ENCODE measurements at regions of chr16 and their contacts with region 1.

Region 1: GRCh38 chr16:56700195-56700594 is 17.9 kb downstream of the MT1X start:
- DNase-seq: no peak
- H3K4me3 ChIP-seq: no peak overlapping the region
- H3K27ac ChIP-seq: no peak overlapping the region
- H3K4me1 ChIP-seq: peaks cover 4% of the 10 kb centered on the region
- CTCF ChIP-seq: no peak

Region 2: DNA sequence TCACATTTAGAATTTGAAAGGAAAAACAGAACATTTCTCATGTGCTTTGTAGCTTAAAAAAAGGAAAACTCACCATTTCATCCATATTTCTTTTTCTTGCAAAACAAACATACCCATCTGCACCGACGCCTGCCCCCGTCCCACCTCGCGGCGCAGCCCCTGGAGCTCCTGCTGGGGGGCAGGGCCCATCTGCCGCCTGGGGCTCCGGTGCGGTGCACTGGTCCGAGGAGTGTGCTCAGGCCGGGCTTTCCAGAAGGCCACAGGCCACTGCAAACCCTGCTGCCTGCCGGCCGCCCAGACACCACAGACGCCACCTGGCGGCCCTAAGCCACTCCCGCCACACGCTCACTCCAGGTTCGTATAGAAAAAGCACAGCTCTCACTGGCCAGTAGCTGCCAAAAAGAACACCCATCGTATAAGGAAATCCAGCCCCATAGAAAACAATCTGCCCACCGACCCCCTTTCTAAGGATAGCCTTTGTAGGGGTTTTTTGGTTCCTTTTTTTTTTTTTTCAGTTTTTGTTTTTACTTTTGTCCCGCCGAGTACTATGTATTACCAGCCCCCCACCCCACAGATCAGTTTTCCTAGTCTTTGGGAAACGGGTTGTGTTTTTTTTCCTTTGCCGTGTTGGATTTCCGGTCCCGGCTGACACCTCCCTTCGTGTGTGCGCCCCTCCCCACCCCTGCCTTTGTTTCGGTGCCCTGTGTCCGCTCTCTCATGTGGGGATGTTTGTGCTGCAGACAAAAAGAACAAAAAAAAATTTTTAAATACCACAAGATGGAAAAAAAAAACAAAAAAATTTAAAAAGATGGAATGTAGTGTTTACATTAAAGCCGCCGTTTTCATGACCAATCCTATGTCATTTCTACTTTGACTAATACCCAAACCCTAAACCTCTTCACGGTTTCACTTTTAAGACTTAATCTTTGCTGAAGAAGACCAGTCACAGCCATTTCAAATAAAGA is 343.6 kb before region 1 on chr16:
- CTCF ChIA-PET with region 1: interaction called, 3 read pairs
- POLR2A ChIA-PET with region 1: no interaction called
- intact Hi-C with region 1: loop called (anchors 1 kb)
- DNase-seq: peak; percentile 81
- H3K4me3 ChIP-seq: peak overlapping the region; percentile 46
- H3K27ac ChIP-seq: no peak overlapping the region
- H3K4me1 ChIP-seq: peaks cover 11% of the 10 kb centered on the region
- CTCF ChIP-seq: peak; percentile 89

Region 3: DNA sequence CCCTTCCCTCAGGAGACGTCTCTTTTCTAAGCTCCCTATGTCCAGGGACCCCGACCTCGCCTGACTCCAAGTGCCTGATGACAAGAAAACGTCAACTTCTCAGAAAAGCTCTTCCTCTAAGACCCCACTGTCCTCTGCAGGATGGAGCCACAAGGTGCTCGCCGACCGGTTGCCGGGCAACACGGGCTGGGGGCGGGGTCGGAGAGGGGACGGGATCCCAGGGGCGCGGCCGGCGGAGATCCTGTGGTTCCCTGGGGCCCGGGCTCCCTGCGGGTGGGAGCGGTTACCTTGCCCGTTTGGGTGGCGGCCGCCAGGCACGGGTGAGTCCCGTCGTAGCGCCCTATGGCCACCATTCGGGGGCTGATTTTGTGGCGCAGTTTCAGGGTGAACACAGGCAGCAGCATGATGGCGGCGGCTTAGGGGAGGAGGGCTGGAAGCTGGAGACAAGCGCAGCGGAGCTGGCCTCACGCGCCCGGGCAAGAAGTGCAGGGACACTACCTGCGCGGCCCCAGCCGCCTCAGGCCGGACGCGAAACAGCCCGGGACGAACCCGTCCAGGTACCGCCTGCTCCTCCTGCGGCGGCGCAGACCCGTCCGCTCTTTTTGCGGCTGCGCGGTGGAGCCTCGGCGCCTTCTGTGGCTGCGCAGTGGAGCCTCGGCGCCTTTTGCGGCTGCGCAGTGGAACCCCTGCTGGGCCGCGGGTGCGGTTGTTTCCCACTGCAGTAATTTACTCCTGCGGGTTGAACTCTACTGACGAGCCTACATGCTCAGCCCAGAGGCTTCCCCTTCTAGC is 180.5 kb before region 1 on chr16 and contains the start of gene BBS2:
- CTCF ChIA-PET with region 1: interaction called, 3 read pairs
- POLR2A ChIA-PET with region 1: no interaction called
- intact Hi-C with region 1: loop called (anchors 2 kb)
- DNase-seq: peak; percentile 91
- H3K4me3 ChIP-seq: peak within 1 kb of the TSS; percentile 80
- H3K27ac ChIP-seq: peak within 1 kb of the TSS; percentile 24
- H3K4me1 ChIP-seq: peaks cover 11% of the 10 kb centered on the region
- CTCF ChIP-seq: peak; percentile 15; the same call in 1 of the 2 replicates
- total RNA-seq, gene BBS2: 13.9 and 15.3 TPM in 2 replicates

Region 4: DNA sequence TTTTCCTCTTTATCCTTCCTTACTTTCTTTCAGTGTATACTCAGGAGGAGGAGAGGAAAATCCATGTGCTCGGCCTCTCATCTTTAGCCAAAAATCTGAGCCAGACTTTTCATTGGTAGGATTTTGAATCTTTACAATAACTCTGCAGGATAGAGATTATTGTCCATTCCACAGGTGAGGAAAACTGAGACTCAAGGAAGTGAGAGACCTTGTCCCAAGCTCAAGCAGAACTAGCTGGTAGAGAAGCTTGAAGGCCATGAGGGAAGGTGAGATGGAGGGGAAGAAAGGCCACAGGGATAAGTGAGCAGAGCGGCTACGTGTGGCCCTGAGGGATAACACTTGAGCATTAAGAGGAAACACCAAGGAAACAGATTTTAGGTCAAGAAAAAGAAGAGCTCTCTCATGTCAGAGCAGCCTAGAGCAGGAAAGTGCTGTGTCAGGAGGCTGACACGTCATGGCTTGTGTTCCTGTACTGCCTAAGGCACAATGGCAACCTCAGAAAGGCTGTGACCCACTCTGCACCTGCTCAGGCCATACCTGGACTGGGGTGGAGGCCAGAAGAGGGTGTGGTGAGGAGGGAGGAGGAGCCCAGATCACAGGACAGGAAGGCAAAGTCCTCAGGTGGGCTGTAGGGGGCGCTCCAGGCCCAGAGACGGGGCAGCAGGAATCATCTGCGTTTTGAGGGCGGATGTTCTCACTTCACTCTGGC is 123.5 kb before region 1 on chr16:
- CTCF ChIA-PET with region 1: interaction called, 8 read pairs
- POLR2A ChIA-PET with region 1: interaction called, 3 read pairs
- intact Hi-C with region 1: loop called (anchors 1 kb)
- DNase-seq: peak; percentile 78
- H3K4me3 ChIP-seq: no peak overlapping the region
- H3K27ac ChIP-seq: no peak overlapping the region
- H3K4me1 ChIP-seq: no peaks in the 10 kb centered on the region
- CTCF ChIP-seq: peak; percentile 92

Region 5: DNA sequence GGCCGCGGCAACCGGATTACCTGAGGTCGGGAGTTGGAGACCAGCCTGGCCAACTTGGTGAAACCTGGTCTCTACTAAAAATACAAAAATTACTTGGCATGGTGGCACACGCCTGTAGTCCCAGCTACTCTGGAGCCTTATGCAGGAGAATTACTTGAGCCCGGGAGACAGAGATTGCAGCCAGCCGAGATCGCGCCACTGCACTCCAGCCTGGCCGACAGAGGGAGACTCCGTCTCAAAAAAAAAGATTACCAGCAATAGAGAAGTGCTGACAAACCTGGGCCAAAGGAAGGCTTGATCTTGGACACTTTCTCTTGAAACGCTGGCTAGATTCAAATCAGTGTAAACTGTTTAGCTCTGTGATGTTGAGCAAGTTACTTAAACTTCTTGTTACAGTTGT is 26.3 kb before region 1 on chr16:
- CTCF ChIA-PET with region 1: no interaction called
- POLR2A ChIA-PET with region 1: interaction called, 4 read pairs
- intact Hi-C with region 1: loop called (anchors 1 kb)
- DNase-seq: peak; percentile 19
- H3K4me3 ChIP-seq: no peak overlapping the region
- H3K27ac ChIP-seq: no peak overlapping the region
- H3K4me1 ChIP-seq: no peaks in the 10 kb centered on the region
- CTCF ChIP-seq: peak; percentile 52; the same call in 1 of the 2 replicates

Region 6: GRCh38 chr16:56681939-56682702 is 18.1 kb before region 1 on chr16 and contains the start of gene MT1X:
- CTCF ChIA-PET with region 1: interaction called, 9 read pairs
- POLR2A ChIA-PET with region 1: interaction called, 17 read pairs
- intact Hi-C with region 1: no loop called
- DNase-seq: peak; percentile 78
- H3K4me3 ChIP-seq: peak within 1 kb of the TSS; percentile 69
- H3K27ac ChIP-seq: no peak within 1 kb of the TSS
- H3K4me1 ChIP-seq: peaks cover 22% of the 10 kb centered on the region
- CTCF ChIP-seq: no peak
- total RNA-seq, gene MT1X: 17.1 and 18.8 TPM in 2 replicates

Region 7: GRCh38 chr16:56789360-56789759 is 89.2 kb after region 1 on chr16:
- CTCF ChIA-PET with region 1: no interaction called
- POLR2A ChIA-PET with region 1: no interaction called
- intact Hi-C with region 1: no loop called
- DNase-seq: peak; percentile 57
- H3K4me3 ChIP-seq: no peak overlapping the region
- H3K27ac ChIP-seq: no peak overlapping the region
- H3K4me1 ChIP-seq: no peaks in the 10 kb centered on the region
- CTCF ChIP-seq: peak; percentile 73

Region 8: DNA sequence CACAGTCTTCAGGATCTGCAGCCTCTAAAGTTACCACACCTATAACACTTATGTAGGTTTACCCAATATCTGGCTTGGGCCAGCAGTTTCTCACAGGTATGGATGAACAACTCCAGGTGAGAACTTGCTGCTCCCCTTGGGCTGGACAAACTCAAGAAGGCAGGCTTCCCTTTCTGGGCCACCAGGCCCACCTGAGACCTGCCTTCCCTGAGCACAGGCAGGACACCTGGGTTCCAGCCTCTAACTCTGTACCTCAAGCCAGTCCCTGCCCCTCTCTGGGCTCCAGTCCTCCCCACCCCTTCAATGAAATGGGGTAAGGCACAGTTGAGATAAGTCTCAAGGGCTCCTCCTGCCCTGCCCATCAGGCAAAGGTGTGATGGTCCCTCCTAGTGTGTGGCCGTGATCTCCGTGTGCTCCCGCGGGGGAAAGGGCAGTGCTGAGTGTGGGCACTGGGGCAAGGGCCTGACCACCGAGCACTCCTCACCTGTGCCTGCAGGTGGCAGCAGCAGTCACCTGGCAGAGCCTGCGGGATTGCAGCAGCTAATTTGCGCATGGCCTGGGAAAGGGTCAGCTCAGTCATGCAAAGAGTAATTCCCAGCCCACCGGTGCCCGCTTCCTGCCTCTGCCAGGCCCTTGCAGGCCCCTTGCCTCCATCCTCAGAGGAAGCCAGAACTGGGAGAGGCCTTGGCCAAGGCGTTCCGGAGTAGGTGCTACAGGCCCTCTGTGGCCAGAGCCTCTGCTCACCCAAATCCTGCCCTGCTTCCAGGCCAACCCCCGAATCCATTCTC is 900.0 kb after region 1 on chr16:
- CTCF ChIA-PET with region 1: no interaction called
- POLR2A ChIA-PET with region 1: no interaction called
- intact Hi-C with region 1: no loop called
- DNase-seq: peak; percentile 47
- H3K4me3 ChIP-seq: no peak overlapping the region
- H3K27ac ChIP-seq: no peak overlapping the region
- H3K4me1 ChIP-seq: no peaks in the 10 kb centered on the region
- CTCF ChIP-seq: peak; percentile 81